ENCODE measurements at regions of chr22 and their contacts with region 1.

Region 1: DNA sequence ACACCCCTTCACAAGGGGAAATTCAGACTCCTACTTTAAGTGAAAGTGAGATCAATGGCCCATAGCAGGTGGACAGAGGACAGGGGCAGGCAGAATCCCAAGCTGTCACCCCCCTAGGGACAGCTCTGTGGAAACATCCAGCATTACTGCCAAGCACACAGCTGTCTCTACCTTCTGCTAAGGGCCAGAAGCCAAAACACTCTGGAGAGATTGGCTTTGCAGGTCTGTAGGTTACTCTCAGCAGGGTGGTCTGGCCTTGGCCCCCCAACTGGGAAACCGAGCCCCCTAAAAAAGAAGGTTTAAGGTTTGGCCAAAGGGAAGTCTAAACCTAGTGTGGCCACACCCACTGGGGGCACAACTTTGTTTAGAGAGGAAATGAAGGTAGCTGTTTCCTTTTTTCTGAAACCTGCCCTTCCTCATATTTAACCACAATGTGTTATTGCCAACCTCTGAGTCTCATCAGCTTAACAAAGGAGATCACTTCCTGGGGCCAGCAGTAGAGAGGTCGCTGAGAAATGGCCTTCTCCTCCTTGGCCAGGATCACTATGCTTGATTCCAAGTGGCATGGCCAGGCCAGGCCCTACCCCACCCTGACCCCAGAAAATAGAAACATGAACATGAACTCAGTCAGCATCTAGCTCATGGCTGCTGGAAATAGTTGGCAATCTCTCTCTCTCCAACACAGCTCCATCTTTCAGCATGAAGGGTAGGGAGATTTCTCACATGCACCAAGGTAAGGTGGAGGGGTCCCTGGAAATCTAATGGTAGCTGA is 25.9 kb upstream of the SCARF2 start:
- DNase-seq: peak; percentile 82
- ATAC-seq: peak; percentile 80
- H3K4me3 ChIP-seq: peak overlapping the region in 4 of 5 experiments; percentile 18 to 50 (median 28)
- H3K4me3 Mint-ChIP-seq: peak overlapping the region; percentile 80
- H3K27ac ChIP-seq: peak overlapping the region; percentile 87 to 89
- H3K27ac Mint-ChIP-seq: peak overlapping the region; percentile 100
- H3K4me1 ChIP-seq: peaks cover 35 to 38% of the 10 kb centered on the region in 2 donors
- H3K4me1 Mint-ChIP-seq: peaks cover 51% of the 10 kb centered on the region
- H3K27me3 ChIP-seq: no peaks in the 10 kb centered on the region
- H3K27me3 Mint-ChIP-seq: no peaks in the 10 kb centered on the region
- CTCF ChIP-seq: no peak

Region 2: GRCh38 chr22:20393909-20394691 is 69.4 kb before region 1 on chr22 and contains the start of gene ZNF74:
- CTCF ChIA-PET with region 1: interaction called, 3 read pairs
- POLR2A ChIA-PET with region 1: interaction called, 3 read pairs
- intact Hi-C with region 1: loop called (anchors 2 kb)
- DNase-seq: peak; percentile 88
- ATAC-seq: peak; percentile 95
- H3K4me3 ChIP-seq: peak within 1 kb of the TSS; percentile 53 to 86 (median 74)
- H3K4me3 Mint-ChIP-seq: peak within 1 kb of the TSS; percentile 97
- H3K27ac ChIP-seq: peak within 1 kb of the TSS; percentile 47 to 77
- H3K27ac Mint-ChIP-seq: peak within 1 kb of the TSS; percentile 95
- H3K4me1 ChIP-seq: peaks cover 10 to 19% of the 10 kb centered on the region in 2 donors
- H3K4me1 Mint-ChIP-seq: peaks cover 29% of the 10 kb centered on the region
- H3K27me3 ChIP-seq: no peaks in the 10 kb centered on the region
- H3K27me3 Mint-ChIP-seq: no peaks in the 10 kb centered on the region
- CTCF ChIP-seq: no peak
- total RNA-seq, gene ZNF74: 11.6 and 13.0 TPM in 2 replicates

Region 3: DNA sequence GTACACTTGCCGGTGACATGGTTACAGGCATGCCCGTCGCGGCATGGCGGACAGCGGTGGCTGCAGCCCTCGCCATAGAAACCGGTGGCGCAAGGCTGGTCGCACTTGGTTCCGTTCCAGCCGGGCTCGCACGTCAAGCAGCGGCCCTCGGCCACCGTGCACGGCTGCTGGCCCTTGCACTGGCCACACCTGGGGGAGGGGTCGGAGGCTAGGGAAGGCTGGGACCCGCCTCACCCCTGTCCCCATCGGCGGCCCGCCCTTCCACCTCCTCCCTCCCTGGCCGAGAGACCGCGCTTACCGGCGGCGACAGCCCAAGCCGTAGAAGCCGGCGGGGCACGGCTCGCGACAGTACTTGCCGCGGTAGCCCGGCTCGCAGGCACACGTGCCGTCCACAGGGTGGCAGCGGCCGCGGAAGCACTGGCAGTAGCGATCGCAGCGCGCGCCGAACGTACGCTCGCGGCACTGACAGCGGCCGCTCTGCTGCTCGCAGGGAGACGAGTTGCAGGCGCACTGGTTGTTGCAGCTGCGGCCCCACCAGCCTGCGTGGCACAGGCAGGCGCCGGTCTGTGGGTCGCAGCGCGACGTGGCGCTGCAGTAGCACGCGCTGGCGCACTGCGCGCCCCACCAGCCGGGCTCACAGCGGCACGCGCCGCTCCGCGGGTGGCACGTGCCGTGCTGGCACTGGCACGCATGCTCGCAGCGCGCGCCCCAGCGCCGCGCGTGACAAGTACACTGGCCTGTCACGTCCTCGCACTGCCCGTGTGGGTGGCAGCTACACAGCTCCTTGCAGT is 32.6 kb before region 1 on chr22:
- CTCF ChIA-PET with region 1: interaction called, 3 read pairs
- POLR2A ChIA-PET with region 1: interaction called, 13 read pairs
- intact Hi-C with region 1: loop called (anchors 1 kb)
- DNase-seq: peak; percentile 78
- ATAC-seq: peak; percentile 56
- H3K4me3 ChIP-seq: peak overlapping the region in 4 of 5 experiments; percentile 47 to 80 (median 67)
- H3K4me3 Mint-ChIP-seq: peak overlapping the region; percentile 90
- H3K27ac ChIP-seq: no peak overlapping the region
- H3K27ac Mint-ChIP-seq: no peak overlapping the region
- H3K4me1 ChIP-seq: peaks cover 36 to 49% of the 10 kb centered on the region in 2 donors
- H3K4me1 Mint-ChIP-seq: peaks cover 32% of the 10 kb centered on the region
- H3K27me3 ChIP-seq: peaks cover 0 to 90% (median 41%) of the 10 kb centered on the region in 4 experiments
- H3K27me3 Mint-ChIP-seq: peaks cover 62% of the 10 kb centered on the region
- CTCF ChIP-seq: peak; percentile 39

Region 4: DNA sequence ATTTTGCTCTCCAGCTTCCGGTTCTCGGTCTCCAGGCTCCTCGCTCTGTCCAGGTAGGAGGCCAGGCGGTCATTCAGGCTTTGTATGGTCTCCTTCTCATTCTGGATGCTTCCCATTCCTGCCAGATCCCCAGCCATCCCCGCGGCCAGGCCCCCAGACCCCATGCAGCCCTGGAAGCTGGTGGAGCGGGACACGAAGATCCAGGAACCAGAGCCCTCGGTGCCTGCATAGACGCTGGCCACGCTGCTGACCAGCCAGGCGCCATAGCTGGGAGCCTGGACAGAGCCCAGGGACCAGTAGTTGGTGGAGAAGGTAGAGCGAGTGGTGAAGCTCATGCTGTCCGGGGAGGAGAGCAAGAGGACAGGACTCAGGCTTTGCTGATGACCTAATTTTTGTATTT is 20.3 kb after region 1 on chr22:
- CTCF ChIA-PET with region 1: interaction called, 10 read pairs
- POLR2A ChIA-PET with region 1: no interaction called
- intact Hi-C with region 1: no loop called
- DNase-seq: no peak
- ATAC-seq: no peak
- H3K4me3 ChIP-seq: no peak overlapping the region
- H3K4me3 Mint-ChIP-seq: no peak overlapping the region
- H3K27ac ChIP-seq: no peak overlapping the region
- H3K27ac Mint-ChIP-seq: no peak overlapping the region
- H3K4me1 ChIP-seq: no peaks in the 10 kb centered on the region
- H3K4me1 Mint-ChIP-seq: peaks cover 8% of the 10 kb centered on the region
- H3K27me3 ChIP-seq: no peaks in the 10 kb centered on the region
- H3K27me3 Mint-ChIP-seq: no peaks in the 10 kb centered on the region
- CTCF ChIP-seq: no peak

Region 5: DNA sequence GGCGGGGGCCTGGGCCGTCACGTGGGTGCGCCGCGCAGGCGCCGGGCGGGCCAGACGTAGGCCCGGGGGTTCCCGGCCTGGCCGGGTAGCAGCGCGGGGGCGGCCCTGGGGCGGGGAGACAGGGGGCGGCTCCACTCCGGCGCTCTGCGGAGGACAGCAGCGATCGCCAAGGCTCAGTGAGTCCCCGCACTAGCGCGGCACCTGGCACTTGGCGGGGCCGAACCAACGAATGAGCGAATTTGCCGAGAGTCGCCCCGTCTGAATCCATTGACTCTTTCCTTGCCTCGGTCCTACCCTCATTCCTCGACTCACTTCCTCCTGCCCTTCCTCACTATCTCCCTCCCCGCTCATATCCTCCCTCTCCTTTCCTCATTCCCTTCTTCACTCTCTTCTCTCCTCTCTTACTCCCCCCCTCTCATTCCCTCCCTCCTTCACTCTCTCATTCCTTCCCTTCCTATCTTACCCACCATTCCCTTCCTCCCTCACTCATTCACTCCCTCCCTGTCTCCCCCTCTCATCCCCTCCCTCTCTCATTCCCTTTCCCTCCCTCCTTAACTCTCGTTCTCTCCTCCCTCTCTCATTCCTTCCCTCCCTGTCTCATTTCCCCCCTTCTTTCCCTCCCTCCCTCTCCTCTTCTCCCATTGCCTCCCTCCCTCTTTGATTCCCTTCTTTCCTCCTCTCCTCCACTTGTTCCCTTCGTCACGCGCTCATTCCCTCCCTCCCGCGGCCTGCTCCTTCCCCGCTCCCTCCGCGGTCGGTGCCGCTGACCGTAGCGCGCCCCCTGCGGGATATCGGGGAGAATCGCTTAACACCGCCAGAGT is 32.6 kb after region 1 on chr22:
- CTCF ChIA-PET with region 1: interaction called, 8 read pairs
- POLR2A ChIA-PET with region 1: interaction called, 13 read pairs
- intact Hi-C with region 1: loop called (anchors 1 kb)
- DNase-seq: peak; percentile 96
- ATAC-seq: peak; percentile 96
- H3K4me3 ChIP-seq: peak overlapping the region; percentile 75 to 85 (median 76)
- H3K4me3 Mint-ChIP-seq: peak overlapping the region; percentile 97
- H3K27ac ChIP-seq: peak overlapping the region; percentile 96 to 98
- H3K27ac Mint-ChIP-seq: peak overlapping the region; percentile 95
- H3K4me1 ChIP-seq: peaks cover 10 to 23% of the 10 kb centered on the region in 2 donors
- H3K4me1 Mint-ChIP-seq: peaks cover 26% of the 10 kb centered on the region
- H3K27me3 ChIP-seq: no peaks in the 10 kb centered on the region
- H3K27me3 Mint-ChIP-seq: no peaks in the 10 kb centered on the region
- CTCF ChIP-seq: peak; percentile 91

Region 6: DNA sequence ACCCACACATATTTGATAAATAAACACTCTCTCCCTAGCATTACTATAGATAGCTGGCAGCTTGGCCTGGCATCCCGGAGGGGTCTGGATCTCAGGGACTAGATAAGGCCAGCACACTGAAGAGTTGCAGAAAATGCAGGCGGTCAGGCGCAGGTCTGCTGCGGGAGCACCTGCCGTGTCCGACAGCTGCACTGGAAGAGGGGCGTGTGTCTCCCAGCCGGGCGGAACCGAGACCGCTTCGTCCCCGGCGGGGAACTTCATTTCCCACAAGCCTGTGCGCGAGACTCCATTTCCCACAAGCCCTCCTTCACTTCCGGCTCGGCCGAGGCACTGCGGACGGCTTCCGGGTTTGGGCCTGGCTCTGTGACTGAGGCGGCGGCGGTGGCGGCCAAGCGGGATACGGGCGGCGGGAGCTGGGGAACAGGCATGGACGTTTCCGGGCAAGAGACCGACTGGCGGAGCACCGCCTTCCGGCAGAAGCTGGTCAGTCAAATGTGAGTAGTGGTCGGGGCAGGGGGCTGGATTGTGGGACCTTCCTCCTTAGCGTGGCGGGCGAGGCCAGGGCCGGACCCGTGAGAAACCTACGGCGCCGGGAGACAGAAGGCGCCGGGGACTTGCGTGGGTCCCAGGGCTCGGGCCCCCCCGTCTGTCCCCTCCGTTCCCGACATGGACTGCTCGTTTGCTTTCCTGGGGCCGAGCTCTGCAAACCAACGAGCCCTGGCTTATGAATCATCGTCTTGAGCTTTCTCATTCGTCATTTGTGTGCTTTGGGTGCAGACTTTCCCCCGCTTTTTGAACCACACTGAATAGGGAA is 44.0 kb after region 1 on chr22 and contains the start of gene MED15:
- CTCF ChIA-PET with region 1: interaction called, 7 read pairs
- POLR2A ChIA-PET with region 1: interaction called, 7 read pairs
- intact Hi-C with region 1: loop called (anchors 1 kb)
- DNase-seq: peak; percentile 92
- ATAC-seq: peak; percentile 85
- H3K4me3 ChIP-seq: peak within 1 kb of the TSS; percentile 77 to 97 (median 87)
- H3K4me3 Mint-ChIP-seq: peak within 1 kb of the TSS; percentile 97
- H3K27ac ChIP-seq: peak within 1 kb of the TSS; percentile 87 to 96
- H3K27ac Mint-ChIP-seq: peak within 1 kb of the TSS; percentile 99
- H3K4me1 ChIP-seq: peaks cover 32 to 39% of the 10 kb centered on the region in 2 donors
- H3K4me1 Mint-ChIP-seq: peaks cover 51% of the 10 kb centered on the region
- H3K27me3 ChIP-seq: no peaks in the 10 kb centered on the region
- H3K27me3 Mint-ChIP-seq: no peaks in the 10 kb centered on the region
- CTCF ChIP-seq: no peak
- total RNA-seq, gene MED15: 134 and 156 TPM in 2 replicates

Measured in B cell (primary cell).